A549 (cell line): ENCODE measurements at regions of chr17 and their contacts with region 1.

Region 1: DNA sequence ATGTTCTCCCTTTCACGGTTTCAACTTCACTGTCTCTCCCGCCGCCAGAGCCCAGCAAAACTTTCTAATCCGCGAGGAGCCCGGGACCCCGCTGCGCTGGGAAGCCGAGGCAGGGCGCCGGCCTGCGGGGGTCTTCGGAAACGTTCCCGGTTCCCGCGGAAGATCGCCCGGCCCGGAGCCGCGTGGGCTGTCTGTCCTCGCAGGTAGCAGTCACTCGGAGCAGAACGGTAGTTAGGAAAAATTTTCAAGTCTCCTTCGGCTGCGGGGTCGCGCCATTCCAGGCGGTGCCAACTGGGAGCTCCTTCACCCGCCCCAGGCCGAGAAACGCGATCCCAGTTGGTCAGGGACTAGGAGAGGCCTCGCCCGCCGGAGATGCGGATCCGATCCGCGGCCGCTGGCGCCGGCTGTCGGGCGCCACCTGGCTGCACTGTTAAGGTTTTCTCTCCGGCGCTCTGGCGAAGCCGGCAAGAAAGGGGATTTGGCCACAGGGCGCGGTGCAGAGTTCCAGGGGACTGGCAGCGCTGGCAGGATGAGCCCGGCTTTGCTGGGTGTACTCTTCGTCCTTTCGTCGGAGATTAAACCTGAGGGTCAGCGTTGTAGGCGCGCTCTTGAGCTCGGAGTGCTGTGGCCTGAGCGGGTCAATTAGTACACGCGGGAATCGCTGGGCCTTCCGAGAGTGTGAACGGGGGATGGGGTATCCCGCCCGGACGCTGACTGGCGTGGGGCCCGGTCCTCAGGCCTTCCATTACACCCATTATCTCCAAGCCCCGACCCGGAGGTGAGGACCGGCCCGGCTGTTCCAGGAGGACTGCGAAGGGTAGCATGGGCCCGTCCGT is 135.4 kb downstream of the KCNJ12 start:
- DNase-seq: peak; percentile 84 to 87
- ATAC-seq: peak; percentile 93 to 98
- H3K4me3 ChIP-seq: peak overlapping the region; percentile 43
- H3K27ac ChIP-seq: peak overlapping the region; percentile 24 to 79; a peak in 5 of 6 replicates
- H3K4me1 ChIP-seq: no peaks in the 10 kb centered on the region; the same call in 2 of the 3 replicates
- CTCF ChIP-seq: peak; percentile 86
- EP300 ChIP-seq: no peak
- POLR2A ChIP-seq: no peak
- RAD21 ChIP-seq: peak; percentile 69 to 86

Region 2: GRCh38 chr17:21457051-21458026 is 54.2 kb before region 1 on chr17:
- CTCF ChIA-PET with region 1: interaction called, 189 read pairs
- POLR2A ChIA-PET with region 1: interaction called, 5 read pairs
- DNase-seq: peak; percentile 80 to 87
- ATAC-seq: peak; percentile 80 to 91
- H3K4me3 ChIP-seq: no peak overlapping the region
- H3K27ac ChIP-seq: no peak overlapping the region
- H3K4me1 ChIP-seq: peaks cover 6% of the 10 kb centered on the region; the same call in 1 of the 3 replicates
- CTCF ChIP-seq: peak; percentile 91
- EP300 ChIP-seq: no peak
- POLR2A ChIP-seq: no peak
- RAD21 ChIP-seq: peak; percentile 65 to 77

Region 3: DNA sequence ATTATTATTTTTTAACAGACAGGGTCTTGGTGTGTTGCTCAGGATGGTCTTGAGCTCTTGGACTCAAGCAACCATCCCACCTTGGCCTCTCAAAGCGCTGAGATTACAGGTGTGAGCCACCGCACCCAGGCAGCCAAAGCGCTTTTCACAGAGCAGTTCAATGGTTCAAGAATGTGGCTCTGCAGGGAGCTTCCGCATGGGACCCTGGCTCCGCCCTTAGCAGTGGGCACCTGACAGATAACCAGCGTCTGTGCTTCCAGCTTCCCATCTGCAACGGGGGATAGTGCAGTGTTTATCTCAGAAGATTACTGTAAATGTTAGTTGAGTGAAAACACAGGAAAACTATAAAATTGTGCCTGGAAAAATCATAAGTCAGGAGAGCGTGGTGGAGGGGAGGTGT is 36.0 kb before region 1 on chr17:
- CTCF ChIA-PET with region 1: interaction called, 11 read pairs
- POLR2A ChIA-PET with region 1: no interaction called
- DNase-seq: no peak
- ATAC-seq: no peak
- H3K4me3 ChIP-seq: no peak overlapping the region
- H3K27ac ChIP-seq: no peak overlapping the region
- H3K4me1 ChIP-seq: no peaks in the 10 kb centered on the region
- CTCF ChIP-seq: no peak
- EP300 ChIP-seq: no peak
- POLR2A ChIP-seq: no peak
- RAD21 ChIP-seq: no peak

Region 4: DNA sequence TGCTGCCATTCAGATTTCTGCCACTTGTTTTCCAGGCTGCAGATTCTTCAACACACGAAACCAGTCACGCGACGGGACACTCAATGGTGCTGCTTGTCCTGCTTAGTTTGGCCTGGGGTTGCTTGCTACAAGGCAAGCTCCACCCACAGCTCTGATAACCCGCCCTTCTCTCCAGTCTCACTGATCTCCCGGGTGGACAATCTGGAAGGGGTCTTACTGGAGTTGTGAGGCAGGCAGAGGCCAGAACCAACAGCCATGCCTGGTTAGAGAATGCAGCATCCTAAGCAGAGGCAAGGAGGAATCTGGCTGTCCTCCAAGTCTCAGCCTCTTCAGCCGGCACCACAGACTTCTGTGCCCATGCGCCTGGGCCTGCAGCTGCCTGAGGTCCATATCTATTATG is 16.3 kb before region 1 on chr17:
- CTCF ChIA-PET with region 1: interaction called, 79 read pairs
- POLR2A ChIA-PET with region 1: no interaction called
- DNase-seq: no peak
- ATAC-seq: no peak
- H3K4me3 ChIP-seq: no peak overlapping the region
- H3K27ac ChIP-seq: no peak overlapping the region
- H3K4me1 ChIP-seq: no peaks in the 10 kb centered on the region
- CTCF ChIP-seq: no peak
- EP300 ChIP-seq: no peak
- POLR2A ChIP-seq: no peak
- RAD21 ChIP-seq: no peak

Region 5: DNA sequence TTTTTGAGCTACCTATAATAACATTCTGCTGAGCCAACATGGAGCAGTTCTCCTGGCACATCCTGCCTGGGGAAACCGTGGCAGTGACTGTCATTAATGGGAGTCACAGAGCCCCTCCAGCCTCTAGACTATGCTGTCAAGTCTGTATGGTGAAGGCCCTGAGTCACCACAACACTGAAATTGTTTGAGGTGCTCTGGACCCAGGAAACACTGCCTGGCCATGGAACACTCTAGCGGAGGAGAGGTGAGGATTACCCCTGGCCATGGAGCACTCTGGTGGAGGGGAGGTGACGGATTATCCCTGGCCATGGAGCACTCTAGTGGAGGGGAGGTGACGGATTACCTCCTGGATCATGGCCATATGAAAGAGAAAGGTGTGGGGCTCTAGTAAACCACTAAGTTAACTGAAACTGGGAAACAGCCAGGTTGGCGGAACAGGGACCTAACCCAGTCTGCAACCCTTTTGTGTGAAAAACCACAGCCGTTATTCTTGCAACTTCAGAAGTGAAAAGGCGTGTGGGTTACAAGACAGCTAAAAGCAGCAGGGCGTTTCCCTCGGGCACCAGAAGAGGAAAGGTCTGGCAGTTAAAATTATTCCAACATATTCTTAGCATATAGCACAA is 21.3 kb after region 1 on chr17:
- CTCF ChIA-PET with region 1: interaction called, 17 read pairs
- POLR2A ChIA-PET with region 1: no interaction called
- DNase-seq: no peak
- ATAC-seq: no peak
- H3K4me3 ChIP-seq: no peak overlapping the region
- H3K27ac ChIP-seq: no peak overlapping the region
- H3K4me1 ChIP-seq: no peaks in the 10 kb centered on the region
- CTCF ChIP-seq: no peak
- EP300 ChIP-seq: no peak
- POLR2A ChIP-seq: no peak
- RAD21 ChIP-seq: no peak

Region 6: GRCh38 chr17:21602176-21602575 is 90.6 kb after region 1 on chr17:
- CTCF ChIA-PET with region 1: no interaction called
- POLR2A ChIA-PET with region 1: no interaction called
- DNase-seq: no peak
- ATAC-seq: no peak
- H3K4me3 ChIP-seq: no peak overlapping the region
- H3K27ac ChIP-seq: no peak overlapping the region
- H3K4me1 ChIP-seq: no peaks in the 10 kb centered on the region
- CTCF ChIP-seq: no peak
- EP300 ChIP-seq: no peak
- POLR2A ChIP-seq: no peak
- RAD21 ChIP-seq: no peak